Tibial artery (tissue), 4 donors: ENCODE measurements at regions of chr11 and their contacts with region 1.

Region 1: GRCh38 chr11:26556581-26556980 is 15.5 kb downstream of the MUC15 start:
- DNase-seq: no peak
- H3K4me3 ChIP-seq: no peak overlapping the region
- H3K27ac ChIP-seq: no peak overlapping the region
- H3K4me1 ChIP-seq: no peaks in the 10 kb centered on the region
- H3K27me3 ChIP-seq: no peaks in the 10 kb centered on the region
- CTCF ChIP-seq: no peak

Region 2: GRCh38 chr11:26493616-26494015 is 63.0 kb before region 1 on chr11:
- intact Hi-C with region 1: loop called (anchors 1 kb)
- DNase-seq: no peak
- H3K4me3 ChIP-seq: no peak overlapping the region
- H3K27ac ChIP-seq: no peak overlapping the region
- H3K4me1 ChIP-seq: no peaks in the 10 kb centered on the region
- H3K27me3 ChIP-seq: no peaks in the 10 kb centered on the region
- CTCF ChIP-seq: no peak

Region 3: DNA sequence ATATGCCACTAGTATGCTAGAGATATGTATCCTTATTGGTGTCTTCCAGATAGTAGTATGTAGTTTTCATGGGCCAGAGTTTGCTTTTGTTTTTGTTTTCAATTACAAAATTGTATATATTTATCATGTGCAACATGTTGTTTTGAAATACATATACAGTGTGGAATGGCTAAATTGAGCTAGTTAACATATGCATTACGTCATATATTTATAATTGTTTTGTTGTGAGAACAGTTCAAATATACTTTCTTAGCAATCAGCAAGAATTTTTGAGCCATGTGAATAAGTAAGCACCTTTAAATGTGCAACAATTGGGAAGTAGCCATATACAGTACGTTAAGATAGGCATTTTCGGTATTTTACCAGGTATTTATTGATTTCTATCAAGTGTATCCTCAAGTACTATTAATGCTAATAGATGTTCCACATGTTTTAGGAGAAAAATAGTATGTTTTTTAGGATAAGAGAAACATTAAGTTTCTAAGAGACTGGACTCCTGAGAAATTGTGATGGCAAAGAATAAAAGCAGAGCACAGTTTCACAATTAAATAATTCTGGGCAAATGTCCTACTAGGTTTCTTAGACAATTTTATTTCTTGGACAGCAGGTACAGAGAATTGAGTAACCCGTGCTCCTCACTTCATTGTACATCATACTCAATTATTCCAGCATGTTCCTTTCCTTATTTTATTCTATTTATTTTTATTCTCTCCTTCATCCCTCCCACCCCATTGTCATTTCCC is 225.8 kb after region 1 on chr11:
- intact Hi-C with region 1: no loop called
- DNase-seq: no peak
- H3K4me3 ChIP-seq: no peak overlapping the region
- H3K27ac ChIP-seq: no peak overlapping the region
- H3K4me1 ChIP-seq: peaks cover 0 to 23% (median 8%) of the 10 kb centered on the region in 4 donors
- H3K27me3 ChIP-seq: no peaks in the 10 kb centered on the region
- CTCF ChIP-seq: no peak